Left ventricle myocardium superior (tissue), 1 donor: ENCODE measurements at regions of chr7 and their contacts with region 1.

Region 1: DNA sequence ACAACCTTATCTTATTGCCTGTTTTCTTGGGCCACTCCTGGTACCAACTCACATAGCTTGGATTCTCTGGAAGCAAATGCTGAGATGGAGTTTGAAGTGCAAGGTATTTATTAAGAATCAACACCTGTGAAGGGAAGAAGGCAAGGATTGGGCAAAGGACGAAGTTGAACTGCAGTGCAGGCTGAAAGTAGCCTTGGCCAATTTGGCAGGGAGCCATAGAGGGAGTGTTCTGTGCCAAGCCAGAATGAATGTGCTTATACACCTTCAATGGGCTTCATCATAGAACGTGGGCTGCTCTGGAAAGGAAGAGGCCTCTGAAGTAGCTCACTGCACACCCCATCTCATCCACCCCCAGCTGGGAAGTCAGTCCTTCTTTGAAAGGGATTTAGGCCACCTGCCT is 79.8 kb upstream of the IFRD1 start:
- DNase-seq: no peak
- ATAC-seq: no peak

Region 2: DNA sequence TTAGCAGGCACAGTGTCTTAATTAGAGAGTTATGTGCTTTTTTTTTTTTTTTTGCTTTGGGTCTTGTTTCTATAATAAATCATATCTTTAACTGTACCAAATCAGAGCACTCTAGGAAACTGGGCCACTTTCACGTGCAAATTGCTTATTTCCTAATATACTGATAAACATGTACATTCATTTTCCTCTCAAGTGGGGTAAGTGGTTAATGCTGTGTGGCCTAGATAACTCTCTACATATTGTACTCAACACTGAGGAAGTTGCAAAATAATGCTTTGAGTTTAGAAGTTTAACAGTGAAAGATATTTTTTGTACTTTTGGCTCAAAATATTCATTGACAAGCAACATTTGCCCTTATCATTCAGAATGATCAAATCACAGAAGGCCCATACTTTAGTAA is 36.1 kb before region 1 on chr7:
- intact Hi-C with region 1: loop called (anchors 2 kb)
- DNase-seq: no peak
- ATAC-seq: no peak